ENCODE measurements at regions of chr1 and their contacts with region 1.

Region 1: GRCh38 chr1:222736972-222737371 is at the start of gene FAM177B:
- DNase-seq: no peak
- ATAC-seq: no peak
- H3K4me3 ChIP-seq: no peak within 1 kb of the TSS
- H3K4me3 Mint-ChIP-seq: no peak within 1 kb of the TSS
- H3K27ac ChIP-seq: no peak within 1 kb of the TSS
- H3K27ac Mint-ChIP-seq: no peak within 1 kb of the TSS
- H3K4me1 ChIP-seq: no peaks in the 10 kb centered on the region
- H3K4me1 Mint-ChIP-seq: no peaks in the 10 kb centered on the region
- H3K27me3 ChIP-seq: no peaks in the 10 kb centered on the region
- H3K27me3 Mint-ChIP-seq: no peaks in the 10 kb centered on the region
- CTCF ChIP-seq: no peak
- total RNA-seq, gene FAM177B: not detected

Region 2: DNA sequence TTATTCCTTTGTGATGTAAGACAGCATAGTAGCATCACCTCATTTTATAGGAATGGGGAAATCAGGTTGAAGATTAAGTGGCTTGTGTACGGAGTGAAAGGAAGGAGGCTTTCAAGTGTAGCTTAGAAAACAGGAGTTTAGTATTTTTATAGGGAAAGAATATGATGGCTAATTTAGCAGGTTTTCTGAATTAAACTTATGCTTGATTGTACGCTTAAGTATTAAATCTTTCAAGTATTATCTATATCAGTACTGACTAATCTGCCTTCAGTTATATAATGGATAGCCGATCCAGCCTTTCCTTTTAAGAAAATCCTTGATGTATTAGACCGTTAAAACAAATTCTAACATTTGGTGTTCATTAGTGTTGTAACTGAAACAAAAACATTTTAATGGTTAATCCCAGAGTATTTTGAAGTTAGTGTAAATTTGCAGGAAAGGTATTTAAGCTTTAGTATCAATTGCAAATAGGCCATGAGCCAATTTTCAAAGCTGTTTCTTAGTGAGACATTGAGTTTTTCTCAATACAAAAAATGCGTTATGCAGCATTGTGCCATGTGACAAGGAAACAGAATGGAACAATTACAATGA is 107.3 kb after region 1 on chr1:
- CTCF ChIA-PET with region 1: no interaction called
- POLR2A ChIA-PET with region 1: no interaction called
- intact Hi-C with region 1: no loop called
- DNase-seq: no peak
- ATAC-seq: no peak
- H3K4me3 ChIP-seq: no peak overlapping the region
- H3K4me3 Mint-ChIP-seq: no peak overlapping the region
- H3K27ac ChIP-seq: no peak overlapping the region
- H3K27ac Mint-ChIP-seq: no peak overlapping the region
- H3K4me1 ChIP-seq: no peaks in the 10 kb centered on the region
- H3K4me1 Mint-ChIP-seq: peaks cover 2% of the 10 kb centered on the region
- H3K27me3 ChIP-seq: no peaks in the 10 kb centered on the region
- H3K27me3 Mint-ChIP-seq: no peaks in the 10 kb centered on the region
- CTCF ChIP-seq: no peak

Region 3: DNA sequence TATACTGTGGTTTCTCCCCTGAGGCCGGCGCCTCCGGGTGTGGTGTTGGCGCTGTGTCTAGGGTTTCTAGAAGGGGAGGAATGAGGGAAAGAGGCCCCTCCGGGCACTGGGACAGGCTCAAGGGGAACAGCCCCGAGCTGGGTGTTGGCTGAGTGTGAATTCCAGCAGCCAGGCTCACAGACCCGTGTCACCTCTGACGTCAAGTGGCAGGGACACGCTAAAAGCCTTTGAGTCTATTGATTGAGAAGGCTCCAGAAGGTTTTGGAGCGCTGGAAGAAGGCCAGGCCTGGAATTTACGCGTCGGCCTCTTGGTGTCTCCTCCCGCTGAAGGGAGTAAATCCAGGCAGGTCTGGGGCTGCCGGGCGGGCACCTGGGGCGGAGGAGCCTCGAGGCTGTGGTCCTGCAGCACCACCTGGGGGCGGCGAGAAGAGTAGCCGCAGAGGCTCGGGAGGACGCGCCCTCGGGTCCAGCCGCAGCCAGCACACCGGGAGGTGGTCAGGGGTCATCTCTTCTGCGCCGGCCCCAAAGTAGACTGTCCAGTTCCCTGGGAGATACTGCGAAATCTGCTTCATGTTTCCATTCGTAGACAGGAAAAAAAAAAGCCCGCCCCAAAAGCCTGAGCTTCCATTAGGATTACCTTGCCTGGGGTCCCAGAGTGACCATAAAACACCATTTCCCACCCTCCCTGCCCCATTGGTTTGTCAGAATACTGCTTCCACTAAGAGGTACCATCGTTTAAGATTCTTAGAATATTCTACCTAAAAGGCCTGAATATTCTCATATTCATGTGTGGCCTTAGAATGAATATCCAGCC is 344.4 kb after region 1 on chr1:
- CTCF ChIA-PET with region 1: interaction called, 7 read pairs
- POLR2A ChIA-PET with region 1: no interaction called
- intact Hi-C with region 1: loop called in 1 of 2 experiments (anchors 1 kb)
- DNase-seq: peak; percentile 45 to 82 (median 70)
- ATAC-seq: peak; percentile 97
- H3K4me3 ChIP-seq: peak overlapping the region; percentile 45
- H3K4me3 Mint-ChIP-seq: peak overlapping the region; percentile 68
- H3K27ac ChIP-seq: peak overlapping the region in 1 of 2 experiments; percentile 16
- H3K27ac Mint-ChIP-seq: peak overlapping the region; percentile 41
- H3K4me1 ChIP-seq: peaks cover 4% of the 10 kb centered on the region
- H3K4me1 Mint-ChIP-seq: no peaks in the 10 kb centered on the region
- H3K27me3 ChIP-seq: peaks cover 0 to 3% of the 10 kb centered on the region in 2 experiments
- H3K27me3 Mint-ChIP-seq: peaks cover 2% of the 10 kb centered on the region
- CTCF ChIP-seq: peak; percentile 66